Psoas muscle (tissue), 8 donors: ENCODE measurements at regions of chr9 and their contacts with region 1.

Region 1: DNA sequence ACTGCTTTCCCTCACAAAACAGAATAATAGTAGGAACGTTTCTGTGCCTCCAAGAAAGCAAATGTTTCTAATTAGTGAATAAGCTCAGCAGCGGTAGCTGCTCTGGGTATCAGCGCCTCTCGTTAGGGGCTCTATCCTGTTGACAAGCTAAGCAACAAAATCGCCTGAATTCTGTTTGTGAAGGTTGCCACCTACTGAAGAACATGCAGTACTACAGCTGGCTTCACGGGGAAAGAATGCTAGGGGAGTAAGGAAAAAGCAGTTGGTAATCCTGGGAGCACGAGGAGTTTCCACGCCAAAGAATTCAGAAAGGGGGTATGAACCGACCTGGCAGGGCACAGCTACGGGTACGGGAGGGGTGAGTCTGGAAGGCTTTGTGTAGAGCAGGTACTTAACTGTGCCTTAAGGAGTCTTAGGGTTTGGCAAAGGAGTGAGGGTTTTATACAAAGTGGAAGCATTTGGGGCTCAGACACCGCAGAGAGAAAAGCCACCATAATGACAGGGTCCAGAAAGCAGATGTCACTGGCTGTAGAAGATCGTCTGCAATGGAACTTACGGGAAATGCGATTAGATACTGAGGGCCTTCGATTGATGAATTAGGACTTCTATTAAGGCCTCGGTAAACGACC is 171.7 kb downstream of the TTC39B start:
- DNase-seq: peak in 1 of 2 donors; percentile 19
- ATAC-seq: peak; percentile 87 to 98 (median 91)
- H3K4me3 ChIP-seq: peak overlapping the region; percentile 26
- H3K27ac ChIP-seq: no peak overlapping the region
- H3K4me1 ChIP-seq: no peaks in the 10 kb centered on the region
- H3K27me3 ChIP-seq: peaks cover 0 to 2% (median 0%) of the 10 kb centered on the region in 3 donors
- CTCF ChIP-seq: peak; percentile 91

Region 2: DNA sequence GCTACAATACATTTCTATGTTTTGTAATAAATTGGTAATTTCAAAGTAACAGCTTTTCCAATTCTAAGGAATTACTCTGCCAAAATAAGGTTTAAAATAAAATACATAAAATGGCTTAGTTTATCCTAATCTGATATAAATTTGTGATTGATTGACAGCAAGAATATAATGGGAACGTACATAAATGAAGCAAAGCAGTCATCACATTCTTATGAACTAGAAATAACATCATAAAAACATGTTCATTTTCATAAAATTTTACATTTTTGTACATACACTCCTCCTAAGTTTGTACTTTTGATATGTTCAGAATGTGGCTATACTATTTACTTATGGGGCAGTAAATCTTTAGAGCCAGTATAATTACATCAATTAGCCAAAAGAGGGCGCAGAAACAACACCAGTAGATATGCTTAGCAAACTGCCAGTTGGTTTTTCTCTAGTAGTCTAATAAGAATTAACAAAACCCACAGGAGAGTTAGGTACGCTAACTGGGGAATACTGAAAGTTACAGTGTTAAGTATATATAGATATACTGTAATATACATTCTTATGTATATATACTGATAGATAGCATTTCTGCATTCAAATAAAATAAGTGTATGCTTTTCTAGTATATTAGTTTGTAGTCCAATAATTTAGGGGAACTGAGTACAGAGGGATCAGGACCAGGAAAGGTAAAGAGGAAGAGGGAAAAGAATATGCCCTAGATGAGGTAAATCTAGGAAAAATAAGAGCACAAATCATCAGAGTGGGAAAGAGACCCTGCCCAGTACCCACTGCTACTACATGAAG is 518.9 kb before region 1 on chr9:
- intact Hi-C with region 1: loop called in 1 of 2 experiments (anchors 10 kb)
- DNase-seq: no peak
- ATAC-seq: peak in 3 of 4 donors; percentile 42 to 72 (median 50)
- H3K4me3 ChIP-seq: no peak overlapping the region
- H3K27ac ChIP-seq: no peak overlapping the region
- H3K4me1 ChIP-seq: no peaks in the 10 kb centered on the region
- H3K27me3 ChIP-seq: no peaks in the 10 kb centered on the region
- CTCF ChIP-seq: peak; percentile 67

Region 3: GRCh38 chr9:15104826-15105420 is 30.4 kb before region 1 on chr9:
- intact Hi-C with region 1: loop called (anchors 1 to 2 kb)
- DNase-seq: no peak
- ATAC-seq: peak; percentile 69 to 86 (median 78)
- H3K4me3 ChIP-seq: no peak overlapping the region
- H3K27ac ChIP-seq: no peak overlapping the region
- H3K4me1 ChIP-seq: no peaks in the 10 kb centered on the region
- H3K27me3 ChIP-seq: no peaks in the 10 kb centered on the region
- CTCF ChIP-seq: peak; percentile 82